Head of caudate nucleus (tissue), 42 donors: ENCODE measurements at regions of chr11 and their contacts with region 1.

Region 1: GRCh38 chr11:33687733-33688479 is 12.7 kb downstream of the C11orf91 start:
- DNase-seq: peak in 37 of 42 donors; percentile 32 to 91 (median 71)

Region 2: GRCh38 chr11:33266393-33267215 is 421.3 kb before region 1 on chr11:
- intact Hi-C with region 1: loop called (anchors 10 kb)
- DNase-seq: no peak

Region 3: DNA sequence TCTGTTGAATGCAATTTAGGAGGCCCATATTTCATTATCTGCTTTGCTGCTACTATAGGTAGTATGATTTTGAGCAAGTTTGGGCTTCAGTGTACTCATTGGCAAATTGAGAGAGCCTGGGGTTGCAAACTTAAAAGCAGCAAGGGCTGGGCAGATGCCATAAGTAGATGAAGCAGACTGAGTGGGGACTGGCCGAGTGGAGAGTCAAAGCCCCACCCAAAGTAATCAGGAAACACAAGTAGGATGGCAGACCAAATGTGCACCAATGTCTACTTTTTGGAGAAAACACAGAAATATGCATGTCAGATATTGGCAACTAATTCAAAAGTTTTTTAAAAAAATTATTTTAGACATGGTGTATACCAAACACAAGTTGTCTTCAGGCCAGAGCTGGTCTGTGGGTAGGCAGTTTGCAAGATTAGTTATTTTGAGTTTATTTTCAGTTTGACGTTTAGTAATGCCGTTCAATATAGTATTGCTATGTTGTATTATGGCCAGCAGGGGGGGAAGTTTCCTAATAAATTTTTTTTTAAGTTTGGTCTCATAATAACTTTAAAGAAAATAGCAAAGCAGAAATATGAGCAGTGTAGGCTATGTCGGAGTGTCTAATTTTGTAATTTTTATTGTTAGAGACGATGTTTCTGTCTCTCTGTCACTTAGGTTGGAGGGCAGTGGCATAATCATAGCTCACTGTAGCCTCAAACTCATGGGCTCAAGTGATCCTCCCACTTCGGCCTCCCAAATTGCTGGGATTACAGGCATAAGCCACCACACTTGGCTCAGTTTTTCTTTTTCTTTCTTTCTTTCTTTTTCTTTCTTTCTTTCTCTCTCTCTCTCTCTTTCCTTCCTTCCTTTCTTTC is 325.6 kb before region 1 on chr11:
- intact Hi-C with region 1: loop called (anchors 2 kb)
- DNase-seq: peak in 1 of 42 donors; percentile 62